Common myeloid progenitor, CD34-positive (primary cell): ENCODE measurements at regions of chr5 and their contacts with region 1.

Region 1: DNA sequence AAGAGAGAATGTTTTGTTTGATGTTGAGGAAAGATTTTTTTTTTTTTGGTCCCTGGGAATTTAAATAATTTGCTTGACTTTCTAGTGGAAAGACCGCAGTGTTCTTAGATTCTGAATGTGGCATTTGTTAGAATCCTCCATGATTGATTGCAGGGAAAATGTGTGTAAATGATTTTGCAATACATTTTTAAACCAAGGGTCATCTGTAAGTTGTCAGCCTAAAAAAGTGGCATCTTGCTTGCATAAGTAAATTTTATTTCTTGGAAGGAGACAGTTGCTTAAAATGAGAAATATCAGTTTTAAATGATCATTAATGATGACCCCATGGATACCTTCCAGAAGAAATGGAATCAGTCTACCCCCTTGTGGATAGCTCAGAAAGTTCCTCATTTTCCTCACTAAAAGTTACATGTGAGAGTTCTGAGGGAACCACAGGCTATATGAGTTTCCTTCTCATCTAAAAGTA is 105.1 kb upstream of the SLC25A48 start:
- DNase-seq: peak; percentile 13 to 38 (median 35)
- H3K4me3 ChIP-seq: no peak overlapping the region
- H3K27ac ChIP-seq: no peak overlapping the region
- H3K4me1 ChIP-seq: no peaks in the 10 kb centered on the region
- H3K27me3 ChIP-seq: peaks cover 0 to 1% (median 0%) of the 10 kb centered on the region in 5 experiments

Region 2: DNA sequence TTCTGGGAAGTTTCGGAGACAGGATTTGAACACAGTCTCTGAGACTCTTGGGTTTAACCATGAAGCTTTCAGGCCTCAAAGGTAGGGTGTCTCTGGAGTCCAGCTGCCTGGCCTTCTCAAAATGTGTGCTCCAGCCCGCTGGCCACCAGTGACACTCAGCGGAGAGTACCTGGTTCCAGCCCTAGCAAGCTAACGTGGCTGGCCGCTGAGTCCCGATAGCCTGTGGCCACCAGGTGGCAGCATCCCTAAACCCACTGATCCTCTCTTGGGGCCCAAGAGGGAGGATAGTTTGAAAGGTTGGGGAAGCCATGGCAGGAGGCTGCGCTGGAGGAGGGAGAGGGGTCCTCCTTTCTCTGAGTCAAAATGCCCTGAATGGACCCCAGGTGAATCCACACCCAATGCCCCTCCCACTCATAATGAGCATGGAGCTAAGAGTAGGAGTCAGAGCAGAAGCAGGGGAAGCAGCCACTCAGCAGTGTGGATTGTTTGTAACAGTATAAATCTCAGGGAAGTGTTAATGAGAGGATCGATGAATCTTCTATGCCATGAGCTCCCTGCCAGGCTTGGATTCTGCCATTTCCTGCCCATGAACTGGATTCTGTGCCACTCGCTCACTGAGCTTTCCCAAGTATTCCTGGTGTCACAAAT is 271.8 kb before region 1 on chr5:
- CTCF ChIA-PET with region 1: interaction called, 12 read pairs
- POLR2A ChIA-PET with region 1: no interaction called
- DNase-seq: peak; percentile 67 to 80 (median 71)
- H3K4me3 ChIP-seq: no peak overlapping the region
- H3K27ac ChIP-seq: no peak overlapping the region
- H3K4me1 ChIP-seq: peaks cover 0 to 13% (median 5%) of the 10 kb centered on the region in 4 experiments
- H3K27me3 ChIP-seq: no peaks in the 10 kb centered on the region

Region 3: DNA sequence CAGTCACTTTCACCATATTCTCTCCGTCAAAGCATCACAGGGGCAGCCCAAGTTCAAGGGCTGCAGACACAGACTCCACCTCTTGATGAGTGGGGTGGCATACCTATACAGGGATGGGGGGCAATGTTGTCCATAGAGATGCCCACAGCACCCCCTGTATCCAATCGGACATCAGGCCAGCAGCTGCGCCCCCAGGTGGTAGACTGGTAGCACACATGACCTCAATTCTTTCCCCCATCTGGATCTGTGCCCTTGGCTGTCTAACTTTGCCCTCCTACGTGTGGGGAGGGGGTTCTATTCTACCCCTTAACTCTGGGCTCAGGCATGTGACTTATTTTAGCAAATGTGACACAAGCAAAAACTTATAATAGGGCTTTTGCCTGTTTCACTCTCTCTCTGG is 21.2 kb after region 1 on chr5:
- CTCF ChIA-PET with region 1: no interaction called
- POLR2A ChIA-PET with region 1: no interaction called
- DNase-seq: no peak
- H3K4me3 ChIP-seq: no peak overlapping the region
- H3K27ac ChIP-seq: no peak overlapping the region
- H3K4me1 ChIP-seq: no peaks in the 10 kb centered on the region
- H3K27me3 ChIP-seq: no peaks in the 10 kb centered on the region